Posterior vena cava (tissue), 2 donors: ENCODE measurements at regions of chr2 and their contacts with region 1.

Region 1: GRCh38 chr2:157810037-157810436 is 66.1 kb downstream of the ACVR1 start:
- DNase-seq: no peak

Region 2: DNA sequence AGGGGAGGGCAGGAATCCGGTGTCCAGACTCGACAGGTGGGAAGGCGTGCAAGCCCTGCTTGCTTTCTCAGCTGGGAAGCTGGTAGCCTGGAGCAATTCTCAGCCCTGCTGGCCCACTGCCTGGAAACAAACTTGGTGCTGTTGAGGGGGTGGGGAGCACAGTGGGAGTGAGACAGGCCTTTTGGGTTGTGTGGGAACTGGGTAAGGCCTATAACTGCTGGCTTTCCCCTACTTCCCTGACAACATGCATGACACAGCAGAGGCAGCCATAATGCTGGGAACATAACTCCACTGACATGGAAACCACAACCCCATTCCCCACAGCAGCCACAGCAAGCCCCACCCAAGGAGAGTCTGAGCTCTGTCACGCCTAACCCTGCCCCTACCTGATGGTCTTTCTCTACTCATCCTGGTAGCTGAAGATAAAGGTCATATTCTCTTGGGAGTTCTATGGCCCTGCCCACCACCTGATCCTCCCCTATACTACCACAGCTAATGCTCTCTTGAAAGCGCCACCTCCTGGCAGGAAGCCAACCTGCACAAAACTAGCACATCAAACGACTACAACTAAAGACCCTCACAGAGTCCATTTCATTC is 58.5 kb before region 1 on chr2:
- intact Hi-C with region 1: no loop called
- DNase-seq: peak; percentile 71

Region 3: DNA sequence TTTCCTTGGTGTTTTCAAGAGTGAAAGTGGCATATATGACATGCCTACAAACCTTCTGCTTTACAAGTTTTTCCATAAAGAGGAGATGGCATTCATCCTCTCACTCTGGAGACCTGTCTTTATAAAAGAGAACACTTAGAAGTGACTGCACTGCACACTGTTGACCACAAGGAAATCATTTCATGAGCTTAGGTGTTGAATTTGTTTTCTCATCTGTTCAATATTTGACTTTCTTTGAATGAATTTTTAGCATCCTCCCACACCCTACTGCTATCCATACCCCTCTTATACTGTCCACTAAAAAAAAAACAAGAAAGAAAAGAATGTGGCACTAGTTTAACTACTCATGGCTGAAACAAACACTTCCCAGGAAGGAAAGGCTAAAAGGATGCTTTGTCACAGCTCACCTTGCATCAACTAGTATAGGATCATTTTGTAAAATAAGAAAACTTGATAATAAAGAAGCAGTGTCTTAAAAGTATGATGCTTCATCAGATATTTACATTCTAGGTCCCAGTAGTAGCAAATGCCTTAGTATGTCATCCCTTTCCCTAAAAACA is 16.9 kb before region 1 on chr2:
- intact Hi-C with region 1: loop called in 1 of 2 experiments (anchors 1 kb)
- DNase-seq: no peak

Region 4: DNA sequence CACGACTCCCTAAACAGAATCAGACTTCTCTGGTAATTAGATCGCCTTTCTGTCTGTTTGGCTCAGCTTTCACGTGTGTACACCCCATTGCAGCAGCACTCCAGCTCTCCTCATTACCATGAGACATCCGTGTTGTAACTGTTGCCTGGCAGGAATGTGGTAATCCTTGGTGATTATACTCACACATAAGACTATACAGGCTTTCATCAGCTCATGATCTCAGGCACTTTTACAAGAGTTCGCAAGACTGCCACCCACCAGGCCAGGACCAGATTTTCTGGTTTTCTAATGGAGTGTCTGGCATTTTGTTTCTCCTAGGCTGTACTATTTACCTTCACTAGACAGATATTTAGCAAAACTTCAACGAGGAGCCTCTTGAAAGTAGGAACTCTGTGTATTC is 15.8 kb after region 1 on chr2:
- intact Hi-C with region 1: no loop called
- DNase-seq: no peak